ENCODE measurements at regions of chr6 and their contacts with region 1.

Region 1: DNA sequence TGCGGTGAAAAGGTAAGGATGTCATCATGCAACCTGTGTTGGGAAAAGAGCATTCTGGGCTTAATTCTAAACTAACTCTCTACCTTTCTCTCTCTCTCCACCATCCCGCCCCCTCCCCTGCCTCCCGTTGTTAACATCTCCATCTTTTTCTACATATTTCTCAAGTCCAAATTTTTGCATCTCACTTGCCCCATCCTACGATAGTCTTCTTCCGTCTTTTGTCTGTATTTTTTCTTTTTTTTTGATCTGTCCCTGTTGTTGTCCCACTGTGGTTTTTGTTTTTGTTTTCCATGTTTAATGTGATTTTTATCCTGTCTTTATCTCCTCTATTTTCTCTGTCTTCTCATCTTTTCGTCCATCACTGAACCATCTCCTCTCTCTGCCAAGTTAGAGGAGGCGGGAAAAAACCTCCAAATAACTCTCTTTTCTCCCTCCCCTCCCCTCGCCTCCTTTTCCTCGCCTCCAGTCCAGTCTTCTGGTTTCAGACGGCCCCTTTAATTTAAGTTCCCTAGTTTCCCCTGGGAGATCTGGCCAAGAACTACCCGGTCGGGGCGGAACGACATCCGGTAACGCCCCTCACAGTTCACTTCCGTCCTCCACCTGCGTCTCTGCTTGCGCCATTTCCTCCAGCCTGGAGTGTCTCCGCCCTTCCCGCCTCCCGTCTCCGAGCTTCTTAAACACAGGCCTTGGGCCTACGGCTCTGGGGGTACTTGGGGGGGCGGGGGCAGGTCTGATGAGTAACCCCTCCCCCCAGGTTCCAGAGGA is at the start of gene NFKBIL1:
- DNase-seq: peak; percentile 97
- ATAC-seq: peak; percentile 78
- H3K4me3 ChIP-seq: peak within 1 kb of the TSS; percentile 51 to 67
- H3K27ac ChIP-seq: peak within 1 kb of the TSS; percentile 50
- H3K4me1 ChIP-seq: peaks cover 19 to 30% of the 10 kb centered on the region in 2 experiments
- H3K27me3 ChIP-seq: no peaks in the 10 kb centered on the region
- CTCF ChIP-seq: no peak
- POLR2A ChIP-seq: peak; percentile 37
- RAD21 ChIP-seq: no peak
- total RNA-seq, gene NFKBIL1: 26.6 TPM

Region 2: DNA sequence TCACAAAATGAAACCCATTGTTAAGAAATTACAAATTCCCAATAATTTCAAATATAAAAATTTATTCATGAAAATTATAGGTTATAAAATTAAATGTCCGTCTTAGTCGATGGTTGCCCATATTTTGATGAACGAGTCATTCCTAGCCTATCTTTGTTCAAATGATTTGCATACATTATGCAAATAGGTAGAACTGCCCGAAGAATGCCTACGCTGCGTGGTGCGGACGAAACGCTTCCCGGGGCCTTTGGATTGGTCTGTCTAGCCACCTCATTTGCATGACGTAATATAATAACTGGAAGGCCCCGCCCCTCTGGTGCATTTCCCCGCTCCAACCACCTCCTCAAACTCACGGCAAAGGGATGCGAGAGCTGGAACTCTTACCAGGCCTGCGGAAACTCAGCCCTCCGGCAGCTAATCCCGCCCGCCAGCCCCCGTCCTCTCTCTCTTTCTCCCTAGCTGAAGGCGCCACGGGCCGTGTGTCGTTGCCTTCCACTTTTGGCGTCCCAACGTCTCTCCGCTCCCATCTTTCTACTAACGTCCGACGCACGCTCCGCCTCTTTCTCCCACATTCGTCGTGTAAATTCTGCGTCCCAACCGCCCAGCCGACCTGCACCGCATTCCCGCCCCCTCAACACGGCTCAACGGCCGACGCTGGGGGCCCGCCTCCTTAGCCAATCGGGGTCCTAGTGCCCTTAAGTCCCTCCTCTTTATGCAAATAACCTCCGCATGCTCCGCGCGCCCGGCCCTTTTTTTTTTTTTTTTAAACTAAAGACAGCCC is 72.9 kb after region 1 on chr6:
- CTCF ChIA-PET with region 1: no interaction called
- POLR2A ChIA-PET with region 1: no interaction called
- RAD21 ChIA-PET with region 1: no interaction called
- intact Hi-C with region 1: loop called (anchors 1 kb)
- DNase-seq: peak; percentile 98
- ATAC-seq: peak; percentile 92
- H3K4me3 ChIP-seq: peak overlapping the region; percentile 57 to 61
- H3K27ac ChIP-seq: peak overlapping the region; percentile 77
- H3K4me1 ChIP-seq: peaks cover 6 to 18% of the 10 kb centered on the region in 2 experiments; a peak in 3 of 4 replicates
- H3K27me3 ChIP-seq: no peaks in the 10 kb centered on the region
- CTCF ChIP-seq: no peak
- POLR2A ChIP-seq: peak; percentile 68
- RAD21 ChIP-seq: no peak

Measured in HCT116 (cell line).